ENCODE measurements at regions of chr13 and their contacts with region 1.

Region 1: GRCh38 chr13:94435604-94436226 is 43.8 kb downstream of the DCT start:
- DNase-seq: no peak
- ATAC-seq: peak; percentile 74
- H3K4me3 Mint-ChIP-seq: no peak overlapping the region
- H3K27ac Mint-ChIP-seq: no peak overlapping the region
- H3K4me1 Mint-ChIP-seq: peaks cover 13% of the 10 kb centered on the region
- H3K27me3 Mint-ChIP-seq: no peaks in the 10 kb centered on the region
- CTCF ChIP-seq: peak; percentile 56

Region 2: GRCh38 chr13:94416454-94417080 is 19.1 kb before region 1 on chr13:
- CTCF ChIA-PET with region 1: interaction called, 25 read pairs
- POLR2A ChIA-PET with region 1: no interaction called
- DNase-seq: peak; percentile 64
- ATAC-seq: peak; percentile 98
- H3K4me3 Mint-ChIP-seq: no peak overlapping the region
- H3K27ac Mint-ChIP-seq: no peak overlapping the region
- H3K4me1 Mint-ChIP-seq: peaks cover 23% of the 10 kb centered on the region
- H3K27me3 Mint-ChIP-seq: no peaks in the 10 kb centered on the region
- CTCF ChIP-seq: peak; percentile 81

Region 3: DNA sequence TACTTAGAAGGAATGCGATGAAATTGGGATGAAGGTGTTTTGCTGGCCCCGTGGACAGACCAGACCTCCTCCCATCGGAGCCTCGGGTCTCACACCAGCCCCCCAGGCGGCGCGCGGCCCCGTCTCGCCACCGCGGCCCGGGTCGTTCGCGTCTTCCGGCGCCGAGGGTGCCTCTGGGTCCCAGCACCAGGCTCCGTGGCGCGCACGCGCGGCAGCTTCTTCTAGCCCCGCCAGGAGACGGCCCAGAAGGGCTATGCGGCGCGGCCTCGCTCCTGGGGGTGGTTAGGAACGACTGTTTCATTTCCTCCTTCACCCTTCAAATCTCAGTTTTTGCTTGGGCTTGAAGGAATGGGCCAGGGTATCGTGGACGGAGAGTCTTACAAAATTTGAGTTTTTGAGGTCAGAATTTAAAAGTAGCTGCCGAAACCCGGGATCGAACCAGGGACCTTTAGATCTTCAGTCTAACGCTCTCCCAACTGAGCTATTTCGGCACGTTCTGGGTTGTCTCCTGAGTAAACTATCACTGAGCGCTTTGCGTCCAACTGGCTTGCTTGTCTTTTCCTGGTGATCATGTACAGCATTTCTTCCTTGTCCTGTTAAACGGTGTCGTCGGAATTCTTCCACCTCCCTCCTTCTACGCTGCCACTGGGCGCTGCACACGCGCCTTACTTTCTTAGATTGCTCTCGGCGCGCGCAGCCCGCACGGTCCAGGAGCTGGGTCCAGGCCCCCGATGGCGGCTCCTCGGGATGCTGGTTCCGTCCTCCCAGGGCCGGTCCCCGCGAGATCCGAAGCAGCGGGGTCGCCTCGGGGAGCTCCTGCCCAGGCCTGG is 113.7 kb after region 1 on chr13:
- CTCF ChIA-PET with region 1: interaction called, 16 read pairs
- POLR2A ChIA-PET with region 1: interaction called, 3 read pairs
- DNase-seq: peak; percentile 88
- ATAC-seq: peak; percentile 74
- H3K4me3 Mint-ChIP-seq: peak overlapping the region; percentile 83
- H3K27ac Mint-ChIP-seq: peak overlapping the region; percentile 91
- H3K4me1 Mint-ChIP-seq: peaks cover 36% of the 10 kb centered on the region
- H3K27me3 Mint-ChIP-seq: peaks cover 17% of the 10 kb centered on the region
- CTCF ChIP-seq: no peak

Region 4: GRCh38 chr13:94620286-94620896 is 184.7 kb after region 1 on chr13:
- CTCF ChIA-PET with region 1: interaction called, 26 read pairs
- POLR2A ChIA-PET with region 1: no interaction called
- DNase-seq: peak; percentile 48
- ATAC-seq: peak; percentile 77
- H3K4me3 Mint-ChIP-seq: no peak overlapping the region
- H3K27ac Mint-ChIP-seq: no peak overlapping the region
- H3K4me1 Mint-ChIP-seq: no peaks in the 10 kb centered on the region
- H3K27me3 Mint-ChIP-seq: no peaks in the 10 kb centered on the region
- CTCF ChIP-seq: peak; percentile 61